Mammary epithelial cell (primary cell): ENCODE measurements at regions of chr22 and their contacts with region 1.

Region 1: GRCh38 chr22:50544078-50544745 is 1.5 kb upstream of the KLHDC7B start:
- DNase-seq: no peak
- H3K4me3 ChIP-seq: peak overlapping the region in 1 of 3 experiments; percentile 22
- H3K27ac ChIP-seq: no peak overlapping the region
- H3K4me1 ChIP-seq: peaks cover 37% of the 10 kb centered on the region
- H3K27me3 ChIP-seq: peaks cover 4% of the 10 kb centered on the region
- CTCF ChIP-seq: peak in 1 of 2 donors; percentile 41

Region 2: GRCh38 chr22:50525390-50526068 is 18.7 kb before region 1 on chr22 and contains the start of gene SCO2:
- CTCF ChIA-PET with region 1: no interaction called
- dilution Hi-C with region 1: no loop called
- in situ Hi-C with region 1: no loop called
- intact Hi-C with region 1: loop called (anchors 1 kb)
- DNase-seq: peak; percentile 97
- H3K4me3 ChIP-seq: peak within 1 kb of the TSS; percentile 64 to 95 (median 86)
- H3K27ac ChIP-seq: peak within 1 kb of the TSS; percentile 39
- H3K4me1 ChIP-seq: peaks cover 27% of the 10 kb centered on the region
- H3K27me3 ChIP-seq: no peaks in the 10 kb centered on the region
- CTCF ChIP-seq: peak; percentile 18 to 60
- total RNA-seq, gene SCO2: 2.8 to 6.6 TPM